ENCODE measurements at regions of chr11 and their contacts with region 1.

Region 1: DNA sequence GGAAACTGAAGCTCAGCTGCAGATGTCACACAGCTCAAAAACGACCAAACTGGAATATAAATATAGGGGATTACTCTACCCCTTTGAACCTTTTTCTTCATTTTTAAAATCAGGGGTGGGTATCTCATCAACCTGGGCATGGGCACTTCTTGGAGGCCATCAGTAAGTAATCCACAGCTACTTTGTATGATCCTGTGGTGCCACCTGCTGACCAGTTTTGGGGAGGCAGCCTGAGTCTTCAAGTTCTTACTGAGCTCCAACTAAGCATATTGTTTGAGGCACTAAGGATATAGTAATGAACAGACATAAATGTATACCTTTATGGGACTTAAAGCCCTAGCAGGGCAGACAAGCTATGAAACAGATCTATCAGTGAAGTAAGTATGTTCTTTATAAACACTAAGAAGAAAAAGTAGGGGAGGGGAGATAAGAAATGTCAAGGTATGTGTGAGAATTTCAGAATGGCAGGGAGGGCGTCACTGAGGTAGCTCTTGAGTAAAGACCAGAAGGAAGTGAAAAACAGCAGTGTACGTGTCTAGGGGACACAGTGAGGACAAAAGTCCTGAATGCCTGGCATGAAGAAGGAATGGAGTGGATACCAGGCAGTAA is 18.4 kb downstream of the TUB start:
- DNase-seq: peak; percentile 66
- CTCF ChIP-seq: peak; percentile 87

Region 2: GRCh38 chr11:7892840-7893254 is 206.5 kb before region 1 on chr11:
- CTCF ChIA-PET with region 1: interaction called, 34 read pairs
- POLR2A ChIA-PET with region 1: no interaction called
- DNase-seq: peak; percentile 52
- CTCF ChIP-seq: peak; percentile 67

Region 3: DNA sequence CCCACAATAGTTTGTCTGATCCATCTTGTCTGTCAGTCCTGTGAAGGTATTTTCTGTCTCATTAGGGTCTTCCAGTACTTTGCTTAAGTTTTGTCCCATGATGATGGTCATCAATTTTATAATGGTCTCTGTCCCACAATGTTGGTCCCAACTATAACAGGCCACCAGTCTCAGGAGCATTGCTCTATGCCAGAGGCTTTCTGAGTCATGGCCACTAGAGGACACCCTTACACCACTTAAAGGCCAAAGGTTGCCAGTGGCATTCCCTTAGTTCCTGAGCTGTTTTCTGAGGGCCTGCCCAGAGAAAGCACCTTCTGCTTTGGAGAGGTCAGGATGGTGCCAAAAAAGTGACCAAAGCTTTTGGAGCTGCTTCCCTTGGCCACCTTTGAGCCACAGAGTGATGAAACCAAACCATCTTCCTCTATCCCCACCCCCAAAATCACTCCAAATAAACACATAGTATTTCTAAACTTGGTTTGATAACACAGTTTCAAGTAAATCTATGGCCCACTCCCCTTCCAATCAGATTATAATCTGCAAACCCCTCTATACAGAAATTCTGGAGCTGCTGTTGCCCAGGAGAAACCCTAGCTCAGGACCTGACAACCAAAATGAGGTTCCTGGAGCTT is 92.9 kb before region 1 on chr11:
- CTCF ChIA-PET with region 1: interaction called, 408 read pairs
- POLR2A ChIA-PET with region 1: interaction called, 3 read pairs
- DNase-seq: peak; percentile 58
- CTCF ChIP-seq: peak; percentile 88

Region 4: GRCh38 chr11:8018484-8019313 is 80.7 kb before region 1 on chr11:
- CTCF ChIA-PET with region 1: interaction called, 38 read pairs
- POLR2A ChIA-PET with region 1: no interaction called
- DNase-seq: peak; percentile 54
- CTCF ChIP-seq: no peak

Region 5: DNA sequence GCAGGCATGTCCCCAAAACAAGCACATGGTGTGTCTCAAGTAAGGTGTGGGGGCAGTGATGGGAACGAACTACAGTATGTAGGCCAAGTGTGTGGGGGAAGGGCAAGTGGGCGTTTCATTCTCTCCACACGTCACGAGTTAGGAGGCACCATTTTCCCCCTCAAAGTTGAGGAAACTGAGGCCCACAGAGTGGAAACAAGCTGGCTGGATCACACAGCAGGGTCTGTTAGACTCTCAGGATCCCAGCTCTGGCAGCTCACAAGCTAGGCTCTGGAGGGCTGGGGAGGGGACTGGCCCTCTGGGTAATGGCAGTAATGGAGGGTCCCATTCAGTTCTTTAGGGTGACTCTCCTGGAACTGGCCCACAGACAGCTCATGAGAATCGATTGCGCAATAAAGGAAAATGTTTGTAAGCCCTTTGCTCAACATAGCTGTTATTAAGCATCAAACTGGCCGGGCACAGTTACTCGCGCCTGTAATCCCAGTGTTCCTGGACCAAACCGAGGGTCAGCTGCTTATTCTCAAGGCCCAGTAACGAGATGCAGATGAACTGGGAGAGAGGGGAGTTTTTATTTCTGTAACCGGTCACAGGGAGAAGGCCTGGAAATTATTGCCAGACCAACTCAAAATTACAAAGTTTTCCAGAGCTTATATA is 42.5 kb before region 1 on chr11:
- CTCF ChIA-PET with region 1: interaction called, 14 read pairs
- POLR2A ChIA-PET with region 1: no interaction called
- DNase-seq: no peak
- CTCF ChIP-seq: no peak

Region 6: DNA sequence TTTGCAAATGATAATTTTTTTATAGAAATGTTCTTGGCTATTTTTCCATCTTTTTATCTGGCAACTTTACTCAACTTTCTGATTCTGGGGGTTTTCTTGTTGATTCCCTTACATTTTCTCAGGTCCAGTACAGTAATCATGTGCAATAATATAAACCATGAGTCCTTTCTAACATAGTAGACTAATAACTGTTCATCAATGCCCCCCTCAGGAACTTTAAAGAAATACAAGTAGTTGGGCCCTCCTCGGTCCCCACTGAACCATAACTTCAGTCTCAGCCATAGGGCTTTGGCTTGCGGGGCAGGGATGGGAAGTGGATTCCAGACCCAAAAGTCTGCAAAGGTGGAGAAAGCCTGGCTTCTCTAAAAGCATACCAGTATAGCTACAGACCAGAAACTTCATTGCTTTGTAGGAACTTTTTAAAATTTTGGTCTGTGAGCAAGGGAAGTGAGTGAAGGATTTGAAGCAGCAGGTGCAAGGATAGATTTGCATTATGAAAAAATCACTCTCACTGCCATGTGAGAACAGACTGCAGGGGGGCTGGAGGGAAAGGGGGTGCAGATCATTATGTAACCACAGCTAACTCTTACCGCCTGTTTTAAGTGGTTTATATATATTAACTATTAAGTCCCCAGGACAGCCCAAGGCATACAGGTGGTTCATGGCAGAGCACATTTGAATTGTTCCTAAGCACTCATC is 28.8 kb before region 1 on chr11:
- CTCF ChIA-PET with region 1: interaction called, 20 read pairs
- POLR2A ChIA-PET with region 1: no interaction called
- DNase-seq: peak; percentile 59
- CTCF ChIP-seq: peak; percentile 30

Region 7: DNA sequence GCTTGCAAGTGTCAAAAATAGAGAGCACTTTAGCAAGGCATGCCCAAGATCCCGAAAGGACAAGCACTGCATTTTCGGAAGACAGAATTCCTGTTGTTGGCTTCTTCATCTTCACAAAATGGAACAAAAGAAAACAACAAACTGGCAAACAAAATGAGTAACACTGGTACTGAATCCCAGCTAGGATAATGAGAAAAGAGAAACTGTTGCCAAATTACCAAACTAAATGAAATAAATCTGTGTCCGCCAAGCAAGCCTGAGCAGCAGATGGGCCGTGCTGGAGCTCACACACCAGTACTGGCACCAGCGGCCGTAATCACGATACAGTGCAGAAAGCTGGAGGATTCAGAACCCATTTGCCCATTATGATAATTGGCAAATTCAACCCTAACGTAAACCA is 12.2 kb after region 1 on chr11:
- CTCF ChIA-PET with region 1: interaction called, 52 read pairs
- POLR2A ChIA-PET with region 1: no interaction called
- DNase-seq: no peak
- CTCF ChIP-seq: no peak

Measured in GM10248 (cell line).